CD8-positive, alpha-beta memory T cell (primary cell): ENCODE measurements at regions of chr6 and their contacts with region 1.

Region 1: DNA sequence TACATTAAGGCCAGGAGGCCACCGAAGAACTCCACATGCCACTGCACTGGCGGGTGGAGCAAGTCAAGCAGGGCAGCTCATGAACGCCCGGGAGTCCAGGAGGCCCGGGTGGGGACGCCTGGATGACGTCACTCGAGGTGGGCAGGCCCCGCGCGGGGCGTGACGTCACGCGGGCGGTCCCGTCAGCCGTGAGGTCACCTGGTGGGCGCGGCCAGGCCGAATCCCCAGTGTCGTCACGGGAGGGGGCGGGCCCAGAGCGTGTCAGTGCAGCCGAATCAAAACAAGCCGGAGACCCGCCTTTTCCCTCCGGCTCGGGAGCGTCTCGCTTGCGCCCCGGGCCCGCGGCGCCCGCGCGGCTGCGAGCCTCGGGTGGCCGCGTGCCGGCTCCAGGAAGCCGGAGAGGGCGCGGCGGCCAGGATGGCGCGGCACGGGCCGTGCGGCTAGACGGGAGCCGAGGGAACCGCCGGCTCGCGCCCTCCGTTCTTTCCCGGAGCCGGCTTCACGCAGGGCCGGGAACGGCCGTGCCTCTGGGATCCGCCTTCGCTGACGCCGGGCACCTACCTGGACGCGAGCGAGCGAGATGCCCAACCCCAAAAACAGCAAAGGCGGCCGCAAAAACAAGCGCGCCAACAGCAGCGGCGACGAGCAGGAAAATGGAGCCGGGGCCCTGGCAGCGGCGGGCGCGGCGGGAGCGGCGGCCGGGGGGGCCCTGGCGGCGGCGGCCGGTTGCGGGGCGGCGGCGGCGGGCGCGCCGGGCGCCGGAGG is at the start of gene HECA:
- DNase-seq: peak; percentile 99 to 100 (median 100)
- H3K4me3 ChIP-seq: peak within 1 kb of the TSS; percentile 86
- H3K4me3 Mint-ChIP-seq: peak within 1 kb of the TSS; percentile 85 to 97 (median 93)
- H3K27ac ChIP-seq: peak within 1 kb of the TSS; percentile 92
- H3K27ac Mint-ChIP-seq: peak within 1 kb of the TSS; percentile 98 to 100 (median 98)
- H3K4me1 ChIP-seq: peaks cover 50% of the 10 kb centered on the region
- H3K4me1 Mint-ChIP-seq: peaks cover 59 to 76% (median 66%) of the 10 kb centered on the region in 3 donors
- H3K27me3 ChIP-seq: no peaks in the 10 kb centered on the region
- H3K27me3 Mint-ChIP-seq: peaks cover 0 to 2% of the 10 kb centered on the region in 2 donors
- total RNA-seq, gene HECA: 63.4 to 64.6 TPM

Region 2: GRCh38 chr6:138973466-138974153 is 161.4 kb before region 1 on chr6:
- CTCF ChIA-PET with region 1: no interaction called
- POLR2A ChIA-PET with region 1: interaction called, 10 read pairs
- DNase-seq: no peak
- H3K4me3 ChIP-seq: no peak overlapping the region
- H3K4me3 Mint-ChIP-seq: no peak overlapping the region
- H3K27ac ChIP-seq: no peak overlapping the region
- H3K27ac Mint-ChIP-seq: peak overlapping the region in 3 of 8 donors; percentile 9 to 31 (median 10)
- H3K4me1 ChIP-seq: peaks cover 31% of the 10 kb centered on the region
- H3K4me1 Mint-ChIP-seq: peaks cover 72 to 90% (median 85%) of the 10 kb centered on the region in 3 donors
- H3K27me3 ChIP-seq: no peaks in the 10 kb centered on the region
- H3K27me3 Mint-ChIP-seq: no peaks in the 10 kb centered on the region

Region 3: DNA sequence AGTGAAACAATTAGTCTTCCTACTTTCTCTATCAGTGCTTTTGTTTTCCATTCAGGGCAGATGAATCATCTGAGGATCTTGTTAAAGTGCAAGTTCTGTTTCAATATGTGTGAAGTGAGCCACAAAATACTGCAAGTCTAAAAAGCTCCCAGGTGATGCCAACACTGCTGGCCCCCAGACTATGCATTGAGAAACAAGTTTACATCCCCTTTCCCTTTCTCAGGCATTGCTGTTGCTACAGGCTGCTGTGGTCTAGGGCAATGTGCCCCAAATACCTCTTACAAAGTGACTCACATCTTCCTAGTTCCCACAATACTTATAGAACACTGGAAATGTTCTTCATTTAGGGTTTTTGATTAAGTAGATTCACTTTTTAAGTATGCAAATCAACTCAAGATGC is 74.7 kb before region 1 on chr6:
- CTCF ChIA-PET with region 1: no interaction called
- POLR2A ChIA-PET with region 1: no interaction called
- DNase-seq: no peak
- H3K4me3 ChIP-seq: no peak overlapping the region
- H3K4me3 Mint-ChIP-seq: no peak overlapping the region
- H3K27ac ChIP-seq: no peak overlapping the region
- H3K27ac Mint-ChIP-seq: no peak overlapping the region
- H3K4me1 ChIP-seq: no peaks in the 10 kb centered on the region
- H3K4me1 Mint-ChIP-seq: peaks cover 0 to 2% (median 0%) of the 10 kb centered on the region in 3 donors
- H3K27me3 ChIP-seq: no peaks in the 10 kb centered on the region
- H3K27me3 Mint-ChIP-seq: peaks cover 3 to 5% of the 10 kb centered on the region in 2 donors

Region 4: DNA sequence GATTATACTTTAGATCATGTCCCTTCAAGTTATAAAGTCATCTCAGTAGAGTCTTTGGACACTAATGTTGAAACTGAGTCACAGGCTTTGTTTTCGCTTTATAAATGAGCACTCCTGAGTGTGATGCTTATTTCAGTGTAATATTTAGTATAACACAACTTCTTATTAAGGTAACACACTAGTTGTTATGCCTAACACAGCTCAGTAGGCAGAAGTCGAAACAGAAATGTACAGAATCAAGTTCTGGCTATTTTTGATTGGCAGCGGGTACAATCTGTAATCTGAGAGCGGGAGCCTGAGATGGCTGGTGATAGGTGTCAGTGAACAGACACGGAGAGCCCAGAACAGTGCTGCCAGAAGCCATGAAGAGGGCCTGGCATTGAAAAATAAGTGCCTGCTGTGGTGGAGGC is 11.3 kb after region 1 on chr6:
- CTCF ChIA-PET with region 1: interaction called, 7 read pairs
- POLR2A ChIA-PET with region 1: interaction called, 14 read pairs
- DNase-seq: no peak
- H3K4me3 ChIP-seq: peak overlapping the region; percentile 23
- H3K4me3 Mint-ChIP-seq: peak overlapping the region; percentile 60 to 81 (median 71)
- H3K27ac ChIP-seq: no peak overlapping the region
- H3K27ac Mint-ChIP-seq: peak overlapping the region; percentile 51 to 89 (median 82)
- H3K4me1 ChIP-seq: peaks cover 95% of the 10 kb centered on the region
- H3K4me1 Mint-ChIP-seq: peaks cover 92 to 97% (median 97%) of the 10 kb centered on the region in 3 donors
- H3K27me3 ChIP-seq: no peaks in the 10 kb centered on the region
- H3K27me3 Mint-ChIP-seq: peaks cover 0 to 2% of the 10 kb centered on the region in 2 donors

Region 5: DNA sequence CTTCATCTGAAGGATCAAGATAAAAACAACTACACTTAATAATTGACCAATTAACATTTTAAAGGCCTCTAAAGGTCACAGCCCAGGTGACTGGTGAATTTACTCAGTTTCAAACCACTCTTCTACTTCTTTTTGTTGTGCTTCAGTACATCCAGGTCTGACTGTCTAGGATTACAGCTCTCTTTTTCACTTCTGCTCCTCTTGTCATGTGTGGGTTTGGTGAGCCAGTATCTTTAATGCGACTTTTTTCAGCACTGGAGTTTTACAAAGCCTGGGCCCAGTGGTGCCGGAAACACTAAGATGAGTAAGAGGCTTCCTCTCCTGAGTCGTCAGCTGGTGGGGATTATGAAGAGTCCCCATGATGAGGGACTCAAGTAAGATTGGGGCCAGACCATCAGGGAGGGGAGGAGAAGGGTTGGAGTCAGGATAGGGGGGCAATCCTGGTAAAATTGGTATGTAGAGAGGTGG is 26.9 kb after region 1 on chr6:
- CTCF ChIA-PET with region 1: interaction called, 19 read pairs
- POLR2A ChIA-PET with region 1: interaction called, 19 read pairs
- DNase-seq: peak; percentile 30 to 78 (median 59)
- H3K4me3 ChIP-seq: peak overlapping the region; percentile 27
- H3K4me3 Mint-ChIP-seq: peak overlapping the region; percentile 66 to 86 (median 81)
- H3K27ac ChIP-seq: peak overlapping the region; percentile 4
- H3K27ac Mint-ChIP-seq: peak overlapping the region; percentile 83 to 98 (median 92)
- H3K4me1 ChIP-seq: peaks cover 87% of the 10 kb centered on the region
- H3K4me1 Mint-ChIP-seq: peaks cover 88 to 94% (median 90%) of the 10 kb centered on the region in 3 donors
- H3K27me3 ChIP-seq: no peaks in the 10 kb centered on the region
- H3K27me3 Mint-ChIP-seq: peaks cover 0 to 1% of the 10 kb centered on the region in 2 donors

Region 6: DNA sequence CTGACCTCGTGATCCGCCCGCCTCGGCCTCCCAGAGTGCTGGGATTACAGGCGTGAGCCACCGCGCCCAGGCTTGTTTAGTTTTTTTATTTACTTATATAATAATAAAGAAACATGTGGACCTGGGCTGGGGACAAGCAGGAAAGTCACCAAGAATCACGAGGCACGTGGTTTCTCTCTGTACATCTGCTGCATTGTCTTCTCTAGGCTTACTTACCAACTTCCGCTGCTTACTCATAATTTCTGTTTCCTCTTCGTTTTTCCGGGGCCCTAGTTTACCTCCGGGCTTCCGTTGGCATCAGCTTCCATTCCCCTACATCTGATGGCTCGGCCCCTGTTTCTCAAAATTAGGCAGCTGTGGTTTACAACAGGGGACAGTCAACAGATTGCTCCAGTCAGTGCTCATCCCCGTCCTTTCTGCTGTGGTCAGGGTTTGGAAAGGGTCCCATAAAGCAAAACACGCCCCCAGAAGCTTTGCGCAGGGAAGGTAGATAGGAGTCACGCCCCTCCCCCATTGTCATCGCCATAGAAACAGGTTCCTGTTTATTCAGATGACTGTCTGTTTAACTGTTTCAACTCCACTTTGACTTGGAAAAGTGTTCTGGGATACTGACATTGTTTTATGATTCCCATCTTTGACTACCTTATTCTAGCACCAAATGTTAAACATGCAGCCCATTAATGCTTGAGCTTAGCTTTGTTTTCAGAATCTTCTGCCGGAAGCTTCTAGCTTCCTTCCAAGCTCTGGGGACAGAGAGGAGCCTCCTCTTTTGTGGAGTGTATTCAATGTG is 188.7 kb after region 1 on chr6:
- CTCF ChIA-PET with region 1: no interaction called
- POLR2A ChIA-PET with region 1: interaction called, 11 read pairs
- DNase-seq: peak; percentile 63 to 90 (median 85)
- H3K4me3 ChIP-seq: peak overlapping the region; percentile 86
- H3K4me3 Mint-ChIP-seq: peak overlapping the region; percentile 69 to 94 (median 88)
- H3K27ac ChIP-seq: peak overlapping the region; percentile 94
- H3K27ac Mint-ChIP-seq: peak overlapping the region; percentile 95 to 99 (median 98)
- H3K4me1 ChIP-seq: peaks cover 32% of the 10 kb centered on the region
- H3K4me1 Mint-ChIP-seq: peaks cover 34 to 46% (median 44%) of the 10 kb centered on the region in 3 donors
- H3K27me3 ChIP-seq: no peaks in the 10 kb centered on the region
- H3K27me3 Mint-ChIP-seq: peaks cover 0 to 2% of the 10 kb centered on the region in 2 donors

Region 7: GRCh38 chr6:139790527-139790926 is 655.5 kb after region 1 on chr6:
- CTCF ChIA-PET with region 1: no interaction called
- POLR2A ChIA-PET with region 1: interaction called, 14 read pairs
- DNase-seq: no peak
- H3K4me3 ChIP-seq: no peak overlapping the region
- H3K4me3 Mint-ChIP-seq: no peak overlapping the region
- H3K27ac ChIP-seq: no peak overlapping the region
- H3K27ac Mint-ChIP-seq: no peak overlapping the region
- H3K4me1 ChIP-seq: no peaks in the 10 kb centered on the region
- H3K4me1 Mint-ChIP-seq: no peaks in the 10 kb centered on the region
- H3K27me3 ChIP-seq: no peaks in the 10 kb centered on the region
- H3K27me3 Mint-ChIP-seq: peaks cover 0 to 7% of the 10 kb centered on the region in 2 donors